Activated CD8-positive, alpha-beta T cell treated with anti-CD3 and anti-CD28 coated beads, Interleukin-2, amount 10 ng/mL, durations not matched to agents 7 days and 5 days (primary cell): ENCODE measurements at regions of chr12 and their contacts with region 1.

Region 1: DNA sequence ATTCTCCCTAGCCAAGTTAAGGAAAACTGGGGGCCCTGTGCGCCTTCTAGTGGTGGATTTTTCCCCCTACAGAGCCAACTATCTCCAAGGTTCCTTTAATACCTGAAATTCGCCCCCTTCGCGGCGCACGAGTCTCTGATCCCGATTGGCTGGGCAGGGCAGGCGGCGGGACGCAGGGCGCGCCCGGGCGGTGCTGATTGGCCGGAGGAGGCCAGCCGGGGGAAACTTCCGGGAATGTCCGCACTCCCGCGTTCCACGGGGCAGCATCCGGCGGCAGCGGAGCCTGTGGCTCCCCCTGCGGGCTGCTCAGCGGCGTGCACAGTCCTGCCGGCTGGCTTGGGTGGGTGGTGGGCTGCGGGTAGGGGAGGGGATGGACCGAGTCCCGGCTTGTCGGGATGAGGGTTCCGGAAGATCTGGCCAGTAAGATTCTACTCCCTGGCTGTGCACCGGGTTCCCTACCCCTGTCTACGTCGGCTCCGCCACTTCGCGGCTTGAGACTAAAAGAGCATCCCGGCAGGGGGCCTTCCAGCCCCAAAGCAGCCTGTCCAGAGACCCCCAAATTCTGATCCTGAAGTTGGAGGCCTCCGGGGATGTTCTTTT is at the start of gene NABP2:
- DNase-seq: peak; percentile 96
- ATAC-seq: peak; percentile 87
- H3K4me3 Mint-ChIP-seq: peak within 1 kb of the TSS; percentile 91
- H3K27ac Mint-ChIP-seq: peak within 1 kb of the TSS; percentile 85
- H3K4me1 Mint-ChIP-seq: peaks cover 54% of the 10 kb centered on the region
- H3K27me3 Mint-ChIP-seq: no peaks in the 10 kb centered on the region
- total RNA-seq, gene NABP2: 64.3 to 69.5 TPM

Region 2: DNA sequence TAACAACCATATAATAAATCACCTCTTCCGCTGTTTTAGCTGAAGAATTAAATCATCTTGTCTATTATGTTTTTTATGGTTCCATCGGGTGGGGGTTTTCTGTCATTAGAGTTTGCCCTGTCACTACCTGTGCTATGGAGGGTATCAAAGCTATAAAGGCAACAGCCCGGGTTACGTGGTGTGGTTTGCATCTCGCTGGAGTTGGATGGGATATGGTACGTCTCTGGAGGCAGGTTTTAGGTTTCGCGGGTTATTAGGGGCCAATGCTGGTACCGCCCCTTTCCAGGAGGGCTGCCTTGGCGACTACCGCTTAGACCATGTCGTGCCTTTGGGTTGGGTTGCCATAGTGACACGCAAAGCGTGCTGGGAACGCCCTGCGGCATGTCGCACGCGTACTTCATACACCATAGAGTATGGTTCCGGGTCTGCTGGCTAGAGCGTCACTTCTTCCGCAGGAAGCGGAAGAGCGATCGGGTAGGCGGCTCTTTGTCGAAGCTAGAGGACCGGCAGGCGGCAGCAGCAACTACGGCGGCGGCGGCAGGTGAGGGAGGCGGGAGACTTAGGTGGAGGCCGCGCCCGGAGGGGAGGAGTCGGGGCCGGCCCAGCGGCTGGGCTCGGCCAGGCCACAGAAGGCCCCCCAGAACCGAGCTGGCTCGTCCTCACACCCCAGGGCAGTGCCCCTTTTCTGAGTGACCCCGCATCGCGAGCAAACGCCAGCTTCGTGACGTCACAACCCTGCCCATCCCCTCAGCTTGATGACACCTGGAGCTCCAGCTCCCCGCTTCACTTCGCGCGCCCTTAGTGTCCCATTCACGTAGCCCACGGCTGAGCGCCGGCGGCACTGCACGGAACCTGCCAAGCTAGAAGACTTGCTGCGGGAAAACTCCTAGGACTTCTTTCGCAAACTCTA is 106.2 kb before region 1 on chr12 and contains the start of gene ZC3H10:
- CTCF ChIA-PET with region 1: interaction called, 45 read pairs
- POLR2A ChIA-PET with region 1: interaction called, 12 read pairs
- DNase-seq: peak; percentile 100
- ATAC-seq: peak; percentile 76
- H3K4me3 Mint-ChIP-seq: peak within 1 kb of the TSS; percentile 100
- H3K27ac Mint-ChIP-seq: peak within 1 kb of the TSS; percentile 100
- H3K4me1 Mint-ChIP-seq: peaks cover 39% of the 10 kb centered on the region
- H3K27me3 Mint-ChIP-seq: no peaks in the 10 kb centered on the region
- total RNA-seq, gene ZC3H10: 9.1 to 10.6 TPM

Region 3: GRCh38 chr12:56127888-56128669 is 96.1 kb before region 1 on chr12 and contains the start of gene ESYT1:
- CTCF ChIA-PET with region 1: interaction called, 12 read pairs
- POLR2A ChIA-PET with region 1: interaction called, 6 read pairs
- DNase-seq: peak; percentile 100
- ATAC-seq: peak; percentile 91
- H3K4me3 Mint-ChIP-seq: peak within 1 kb of the TSS; percentile 88
- H3K27ac Mint-ChIP-seq: peak within 1 kb of the TSS; percentile 91
- H3K4me1 Mint-ChIP-seq: peaks cover 70% of the 10 kb centered on the region
- H3K27me3 Mint-ChIP-seq: no peaks in the 10 kb centered on the region
- total RNA-seq, gene ESYT1: 317 to 333 TPM

Region 4: GRCh38 chr12:56206457-56207166 is 17.6 kb before region 1 on chr12:
- CTCF ChIA-PET with region 1: interaction called, 45 read pairs
- POLR2A ChIA-PET with region 1: interaction called, 5 read pairs
- DNase-seq: peak; percentile 56
- ATAC-seq: peak; percentile 62
- H3K4me3 Mint-ChIP-seq: no peak overlapping the region
- H3K27ac Mint-ChIP-seq: no peak overlapping the region
- H3K4me1 Mint-ChIP-seq: no peaks in the 10 kb centered on the region
- H3K27me3 Mint-ChIP-seq: no peaks in the 10 kb centered on the region

Region 5: DNA sequence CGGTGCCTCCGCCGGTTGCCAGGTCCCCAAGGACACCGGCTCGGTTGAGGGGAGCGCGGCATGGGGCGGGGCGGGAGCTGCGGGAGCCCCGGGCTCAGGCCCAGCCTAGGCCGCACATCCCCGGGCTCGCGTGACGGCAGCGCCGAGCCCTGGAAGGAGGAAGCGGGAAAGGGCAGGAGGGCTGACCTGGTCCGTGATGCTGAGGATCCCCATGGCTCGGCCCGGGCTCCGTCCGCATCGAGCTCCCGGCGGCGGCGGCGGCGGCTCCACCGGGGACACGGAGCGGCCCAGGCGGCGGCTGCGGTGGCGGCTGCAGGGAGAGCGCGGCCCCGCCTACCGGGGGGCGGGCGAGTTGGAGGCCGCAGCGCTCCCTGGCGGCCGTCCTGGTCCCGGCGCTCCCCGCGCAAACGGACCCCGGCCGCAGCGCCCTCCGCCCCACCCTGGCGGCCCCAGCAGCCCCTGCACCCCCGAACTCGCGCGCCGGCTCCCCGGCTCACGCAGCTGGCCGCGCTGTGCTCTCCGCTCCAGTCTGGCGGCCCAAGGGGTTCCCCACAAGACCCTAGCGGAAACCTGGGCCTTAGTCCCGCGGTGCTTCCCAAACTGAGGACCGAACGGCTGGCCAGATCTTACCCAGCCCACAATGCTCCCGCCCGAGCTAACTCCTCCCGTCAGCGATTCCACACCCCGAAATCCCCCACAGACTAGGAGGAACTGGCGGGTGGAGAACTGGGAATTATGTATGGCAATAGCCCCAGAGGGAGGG is 34.0 kb after region 1 on chr12 and contains the start of gene ANKRD52:
- CTCF ChIA-PET with region 1: interaction called, 11 read pairs
- POLR2A ChIA-PET with region 1: interaction called, 6 read pairs
- DNase-seq: peak; percentile 81
- ATAC-seq: peak; percentile 96
- H3K4me3 Mint-ChIP-seq: peak within 1 kb of the TSS; percentile 86
- H3K27ac Mint-ChIP-seq: peak within 1 kb of the TSS; percentile 83
- H3K4me1 Mint-ChIP-seq: peaks cover 20% of the 10 kb centered on the region
- H3K27me3 Mint-ChIP-seq: no peaks in the 10 kb centered on the region
- total RNA-seq, gene ANKRD52: 54.5 to 55.0 TPM

Region 6: GRCh38 chr12:56266693-56267442 is 42.7 kb after region 1 on chr12 and contains the start of gene COQ10A:
- CTCF ChIA-PET with region 1: interaction called, 15 read pairs
- POLR2A ChIA-PET with region 1: interaction called, 9 read pairs
- DNase-seq: peak; percentile 93
- ATAC-seq: peak; percentile 92
- H3K4me3 Mint-ChIP-seq: peak within 1 kb of the TSS; percentile 93
- H3K27ac Mint-ChIP-seq: peak within 1 kb of the TSS; percentile 95
- H3K4me1 Mint-ChIP-seq: peaks cover 18% of the 10 kb centered on the region
- H3K27me3 Mint-ChIP-seq: no peaks in the 10 kb centered on the region
- total RNA-seq, gene COQ10A: 19.6 to 19.7 TPM